WTC11 (cell line): ENCODE measurements at regions of chr4 and their contacts with region 1.

Region 1: DNA sequence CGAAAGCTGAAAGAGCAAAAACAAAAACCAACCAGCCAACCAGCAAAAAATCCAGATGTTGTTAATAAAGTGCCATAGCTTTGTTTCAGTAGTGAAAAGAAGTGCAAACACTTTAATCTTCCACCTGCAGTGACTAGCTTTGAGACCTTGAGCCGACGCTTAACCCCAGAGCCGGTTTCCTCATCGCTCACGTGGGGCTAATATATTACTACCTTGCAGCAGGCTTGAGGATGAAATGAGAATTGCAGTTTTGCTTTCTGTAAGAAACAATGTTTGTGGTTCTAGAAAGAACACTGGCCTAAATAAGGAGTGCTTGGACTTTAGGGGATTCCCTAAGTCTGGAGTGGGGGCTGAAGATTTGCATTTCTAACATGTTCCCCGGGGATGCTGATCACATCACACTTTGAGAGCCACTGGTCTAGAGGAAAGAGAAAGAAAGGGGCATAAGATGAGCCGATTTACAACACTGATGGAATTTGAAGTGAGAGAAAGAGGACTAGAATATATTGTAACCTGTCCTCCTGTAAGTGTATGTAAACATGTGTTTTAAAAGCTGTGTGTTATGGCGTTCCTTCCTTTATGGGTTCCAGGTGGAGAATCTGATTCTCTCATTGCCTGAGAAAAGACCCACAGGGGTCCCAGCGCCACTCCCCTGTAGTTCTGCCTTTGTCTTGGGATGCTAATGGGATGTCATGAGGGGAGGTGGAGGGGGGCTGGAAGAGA is 1.4 kb downstream of the FGF2 start:
- DNase-seq: peak; percentile 83
- ATAC-seq: peak; percentile 75
- H3K4me3 Mint-ChIP-seq: peak overlapping the region; percentile 80
- H3K27ac Mint-ChIP-seq: peak overlapping the region; percentile 97
- H3K4me1 Mint-ChIP-seq: peaks cover 59% of the 10 kb centered on the region
- H3K27me3 Mint-ChIP-seq: no peaks in the 10 kb centered on the region
- CTCF ChIP-seq: no peak

Region 2: GRCh38 chr4:122732329-122733026 is 95.6 kb before region 1 on chr4 and contains the start of gene BBS12:
- CTCF ChIA-PET with region 1: interaction called, 4 read pairs
- POLR2A ChIA-PET with region 1: interaction called, 10 read pairs
- DNase-seq: peak; percentile 100
- ATAC-seq: peak; percentile 97
- H3K4me3 Mint-ChIP-seq: peak within 1 kb of the TSS; percentile 90
- H3K27ac Mint-ChIP-seq: peak within 1 kb of the TSS; percentile 96
- H3K4me1 Mint-ChIP-seq: peaks cover 10% of the 10 kb centered on the region
- H3K27me3 Mint-ChIP-seq: no peaks in the 10 kb centered on the region
- CTCF ChIP-seq: no peak
- total RNA-seq, gene BBS12: 2.1 to 2.7 TPM (median 2.3 TPM) in 3 replicates

Region 3: DNA sequence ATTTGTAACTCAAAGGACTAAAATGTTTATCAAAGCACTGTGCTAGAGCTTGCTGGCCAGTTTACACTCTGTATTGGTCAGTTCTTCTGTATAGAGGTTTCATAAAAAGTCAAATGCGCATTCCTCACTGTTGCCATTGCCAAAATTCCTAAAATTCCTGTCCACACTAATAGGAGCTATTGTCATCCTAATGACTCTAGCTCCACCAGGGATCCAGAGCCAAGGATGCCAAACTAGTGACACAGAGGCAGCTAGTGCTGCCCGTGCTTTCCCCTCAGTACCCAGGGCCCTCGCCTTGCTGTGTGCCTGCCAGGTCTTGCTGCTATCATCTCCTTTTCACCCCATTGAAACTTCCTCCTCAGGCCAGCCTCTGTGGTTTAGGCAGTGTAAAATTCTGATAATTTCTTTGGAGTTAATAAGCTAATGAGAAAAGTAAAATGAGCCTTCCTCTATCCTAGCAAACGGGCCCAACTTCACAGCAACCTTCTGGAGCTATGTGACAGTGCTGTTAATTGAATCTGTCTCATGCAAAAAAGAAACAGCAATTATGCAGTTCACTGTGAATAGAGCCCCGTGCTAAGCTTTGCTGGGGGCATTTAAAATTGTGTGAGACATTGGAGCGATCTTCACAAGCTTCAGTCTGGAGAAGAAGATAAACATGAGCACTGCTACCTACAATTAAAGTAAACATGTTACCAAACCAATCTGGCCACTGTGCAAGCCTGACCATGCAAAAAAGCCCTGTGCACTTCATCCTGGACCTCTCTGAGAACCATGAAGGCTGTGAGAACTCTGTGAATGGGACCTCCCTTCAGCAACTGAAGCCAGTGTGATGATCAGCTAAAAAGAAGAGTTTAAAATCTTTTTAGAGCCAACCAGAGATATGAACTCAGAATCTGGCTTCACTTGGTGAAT is 44.5 kb before region 1 on chr4:
- CTCF ChIA-PET with region 1: interaction called, 3 read pairs
- POLR2A ChIA-PET with region 1: interaction called, 20 read pairs
- DNase-seq: peak; percentile 78
- ATAC-seq: peak; percentile 98
- H3K4me3 Mint-ChIP-seq: peak overlapping the region; percentile 51
- H3K27ac Mint-ChIP-seq: peak overlapping the region; percentile 100
- H3K4me1 Mint-ChIP-seq: peaks cover 82% of the 10 kb centered on the region
- H3K27me3 Mint-ChIP-seq: no peaks in the 10 kb centered on the region
- CTCF ChIP-seq: no peak

Region 4: GRCh38 chr4:122798101-122798500 is 29.9 kb before region 1 on chr4:
- CTCF ChIA-PET with region 1: interaction called, 6 read pairs
- POLR2A ChIA-PET with region 1: interaction called, 23 read pairs
- DNase-seq: peak; percentile 41
- ATAC-seq: peak; percentile 55
- H3K4me3 Mint-ChIP-seq: peak overlapping the region; percentile 28
- H3K27ac Mint-ChIP-seq: peak overlapping the region; percentile 99
- H3K4me1 Mint-ChIP-seq: peaks cover 49% of the 10 kb centered on the region
- H3K27me3 Mint-ChIP-seq: no peaks in the 10 kb centered on the region
- CTCF ChIP-seq: no peak